Heart right ventricle (tissue), 16 donors: ENCODE measurements at regions of chr1 and their contacts with region 1.

Region 1: DNA sequence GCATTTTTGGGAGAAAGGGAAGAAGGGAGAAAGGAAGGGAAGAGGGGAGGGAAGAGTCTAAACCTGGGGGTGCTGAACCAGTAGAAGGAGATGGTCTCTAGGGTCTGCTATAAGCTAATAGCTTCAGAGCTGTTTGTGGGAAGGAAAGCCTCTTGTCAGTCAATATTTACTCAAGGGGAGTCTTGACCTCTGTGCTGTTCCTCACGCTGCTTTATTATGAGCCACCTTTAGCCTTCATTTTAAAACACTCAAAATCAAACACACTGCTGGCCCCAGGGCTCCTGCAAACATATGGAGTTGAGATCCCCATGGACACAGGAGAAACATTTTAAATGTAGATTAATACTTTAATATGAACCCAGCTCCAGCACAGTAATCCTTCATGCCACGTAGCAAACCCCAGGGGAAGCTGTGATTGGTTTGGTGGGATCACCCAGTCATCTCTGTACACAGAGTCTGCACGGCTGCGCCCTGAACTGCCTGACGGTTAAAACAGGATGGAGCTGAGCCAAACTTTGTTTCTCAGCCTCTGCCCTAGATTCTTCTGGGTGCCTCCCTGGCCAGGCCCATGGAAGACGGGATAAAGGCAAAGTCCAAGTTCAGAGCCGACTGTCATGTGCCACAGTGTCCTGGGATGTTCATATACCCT is 40.2 kb upstream of the VWA5B1 start:
- DNase-seq: peak in 1 of 2 donors; percentile 8
- ATAC-seq: peak in 4 of 8 donors; percentile 16 to 83 (median 42)
- H3K4me3 ChIP-seq: no peak overlapping the region
- H3K27ac ChIP-seq: no peak overlapping the region
- H3K4me1 ChIP-seq: peaks cover 0 to 6% (median 0%) of the 10 kb centered on the region in 9 donors
- H3K27me3 ChIP-seq: peaks cover 0 to 7% (median 5%) of the 10 kb centered on the region in 7 donors
- CTCF ChIP-seq: no peak

Region 2: GRCh38 chr1:20100632-20101355 is 149.7 kb before region 1 on chr1:
- intact Hi-C with region 1: no loop called
- DNase-seq: peak; percentile 28 to 44
- ATAC-seq: peak; percentile 63 to 87 (median 79)
- H3K4me3 ChIP-seq: no peak overlapping the region
- H3K27ac ChIP-seq: no peak overlapping the region
- H3K4me1 ChIP-seq: peaks cover 0 to 13% (median 0%) of the 10 kb centered on the region in 9 donors
- H3K27me3 ChIP-seq: no peaks in the 10 kb centered on the region
- CTCF ChIP-seq: peak; percentile 65 to 86 (median 78)

Region 3: DNA sequence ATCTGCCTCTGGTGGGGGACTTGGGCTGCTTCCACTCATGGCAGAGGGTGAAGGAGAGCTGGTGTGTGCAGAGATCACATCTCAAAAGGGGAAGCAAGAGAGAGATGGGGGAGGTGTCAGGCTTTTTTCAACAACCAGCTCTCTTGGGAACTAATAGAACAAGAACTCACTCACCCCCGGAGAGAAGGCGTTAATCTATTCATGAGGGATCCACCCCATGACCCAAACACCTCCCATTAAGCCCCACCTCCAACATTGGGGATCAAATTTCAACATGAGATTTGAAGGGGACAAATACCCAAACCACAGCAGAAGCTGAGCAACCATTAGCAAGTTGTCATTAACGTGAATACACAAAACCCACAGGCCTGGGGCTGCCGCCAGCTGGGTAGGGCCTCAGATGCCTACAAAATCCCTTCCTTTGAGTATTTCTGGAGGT is 28.2 kb after region 1 on chr1:
- intact Hi-C with region 1: loop called in 1 of 10 experiments (anchors 1 kb)
- DNase-seq: no peak
- ATAC-seq: no peak
- H3K4me3 ChIP-seq: no peak overlapping the region
- H3K27ac ChIP-seq: no peak overlapping the region
- H3K4me1 ChIP-seq: peaks cover 0 to 11% (median 7%) of the 10 kb centered on the region in 9 donors
- H3K27me3 ChIP-seq: peaks cover 0 to 12% (median 0%) of the 10 kb centered on the region in 7 donors
- CTCF ChIP-seq: no peak

Region 4: GRCh38 chr1:20413136-20413775 is 162.8 kb after region 1 on chr1:
- intact Hi-C with region 1: no loop called
- DNase-seq: no peak
- ATAC-seq: no peak
- H3K4me3 ChIP-seq: no peak overlapping the region
- H3K27ac ChIP-seq: no peak overlapping the region
- H3K4me1 ChIP-seq: peaks cover 0 to 6% (median 0%) of the 10 kb centered on the region in 9 donors
- H3K27me3 ChIP-seq: peaks cover 0 to 8% (median 2%) of the 10 kb centered on the region in 7 donors
- CTCF ChIP-seq: no peak